ENCODE measurements at regions of chr16 and their contacts with region 1.

Region 1: DNA sequence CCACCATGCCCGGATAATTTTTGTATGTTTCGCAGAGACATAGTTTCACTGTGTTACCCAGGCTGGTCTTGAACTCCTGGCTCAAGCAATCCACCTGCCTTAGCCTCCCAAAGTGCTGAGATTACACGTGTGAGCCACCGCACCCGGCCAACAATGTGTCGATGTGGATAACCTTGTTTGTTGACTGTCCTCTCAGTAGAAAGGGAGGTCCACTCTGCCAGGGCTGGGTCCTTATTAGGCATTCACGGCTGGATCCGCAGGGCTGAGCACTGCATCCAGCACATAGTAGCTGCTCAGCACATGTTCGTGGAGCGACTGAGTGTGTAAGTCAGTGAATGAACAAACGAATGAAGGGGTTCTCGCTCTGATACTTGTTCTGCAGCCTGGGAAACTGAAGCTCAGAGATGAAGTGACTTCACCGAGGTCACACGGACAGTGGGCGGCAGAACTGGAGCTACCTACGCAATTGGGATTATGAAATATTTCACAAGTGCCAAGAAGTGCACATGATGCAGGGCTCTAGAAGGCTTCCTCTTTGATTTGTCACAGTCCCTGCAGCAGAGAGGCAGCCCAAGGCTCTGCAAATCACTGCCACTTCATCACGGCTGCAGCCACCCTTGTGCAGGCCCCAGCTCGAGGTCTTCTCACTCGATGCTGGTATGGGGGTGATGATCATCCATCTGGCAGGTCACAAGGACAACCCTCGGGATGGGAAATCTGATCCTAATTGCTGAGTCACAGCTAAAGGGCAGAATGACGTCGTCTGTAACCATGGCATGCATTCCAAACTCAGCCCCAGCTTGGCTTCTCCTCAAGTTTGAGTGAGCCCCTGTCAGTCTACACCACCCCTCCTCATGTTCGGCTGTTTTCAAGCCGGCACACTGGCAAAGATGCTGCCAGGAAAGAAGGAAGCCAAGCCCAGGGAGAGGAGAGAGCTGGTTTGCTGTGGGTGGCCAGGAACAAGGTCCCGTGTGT is 28.0 kb upstream of the SNN start:
- DNase-seq: no peak
- H3K4me3 Mint-ChIP-seq: no peak overlapping the region
- H3K27ac Mint-ChIP-seq: no peak overlapping the region
- H3K4me1 Mint-ChIP-seq: peaks cover 5% of the 10 kb centered on the region
- H3K27me3 Mint-ChIP-seq: peaks cover 11% of the 10 kb centered on the region

Region 2: GRCh38 chr16:11396241-11397048 is 243.8 kb before region 1 on chr16:
- intact Hi-C with region 1: loop called (anchors 1 kb)
- DNase-seq: peak; percentile 40
- H3K4me3 Mint-ChIP-seq: no peak overlapping the region
- H3K27ac Mint-ChIP-seq: no peak overlapping the region
- H3K4me1 Mint-ChIP-seq: no peaks in the 10 kb centered on the region
- H3K27me3 Mint-ChIP-seq: peaks cover 3% of the 10 kb centered on the region

Region 3: DNA sequence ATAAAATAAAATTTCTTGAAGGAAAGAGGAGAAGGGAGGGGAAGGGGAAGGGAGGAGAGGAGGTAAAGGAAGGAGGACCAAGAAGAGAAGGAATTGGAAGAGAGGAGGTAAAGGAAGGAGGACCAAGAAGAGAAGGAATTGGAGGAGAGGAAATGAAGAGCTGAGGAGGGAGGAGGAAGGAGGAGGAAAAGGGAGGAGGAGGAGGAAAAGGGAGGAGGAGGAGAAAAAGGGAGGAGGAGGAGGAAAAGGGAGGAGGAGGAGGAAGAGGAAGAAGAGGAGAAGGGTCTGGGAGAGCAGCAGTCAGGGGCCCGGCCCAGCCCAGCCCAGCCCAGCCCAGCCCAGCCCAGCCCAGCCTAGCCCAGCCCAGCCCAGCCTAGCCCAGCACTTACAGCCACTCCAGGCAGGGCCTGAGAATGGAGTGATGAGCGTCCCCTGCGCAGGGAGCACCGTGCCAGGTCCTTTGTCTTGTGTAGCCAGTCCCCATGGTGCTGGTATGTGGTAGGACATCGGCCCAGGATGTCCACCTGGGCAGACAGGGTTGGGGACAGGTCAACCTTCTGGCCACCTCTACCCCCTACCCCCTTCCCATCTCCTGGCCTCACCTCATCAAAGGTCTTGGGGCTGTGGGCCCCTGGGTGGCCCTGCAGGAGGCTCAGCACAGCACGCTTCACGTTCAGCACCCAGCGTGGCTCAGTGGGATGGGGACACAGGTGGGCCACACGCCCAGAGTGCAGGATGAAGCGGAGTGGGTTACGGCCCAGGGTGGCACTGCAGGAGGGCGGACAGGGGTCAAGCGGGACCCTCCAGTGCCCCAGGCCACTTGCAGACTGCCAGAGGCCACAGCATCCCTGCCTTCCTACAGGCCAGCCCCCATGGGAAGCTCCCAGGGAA is 124.4 kb before region 1 on chr16:
- intact Hi-C with region 1: no loop called
- DNase-seq: no peak
- H3K4me3 Mint-ChIP-seq: no peak overlapping the region
- H3K27ac Mint-ChIP-seq: no peak overlapping the region
- H3K4me1 Mint-ChIP-seq: no peaks in the 10 kb centered on the region
- H3K27me3 Mint-ChIP-seq: no peaks in the 10 kb centered on the region

Region 4: GRCh38 chr16:11560701-11561449 is 79.3 kb before region 1 on chr16:
- intact Hi-C with region 1: loop called (anchors 1 kb)
- DNase-seq: peak; percentile 66
- H3K4me3 Mint-ChIP-seq: peak overlapping the region; percentile 81
- H3K27ac Mint-ChIP-seq: peak overlapping the region; percentile 95
- H3K4me1 Mint-ChIP-seq: peaks cover 79% of the 10 kb centered on the region
- H3K27me3 Mint-ChIP-seq: no peaks in the 10 kb centered on the region

Region 5: GRCh38 chr16:11689031-11689761 is 49.0 kb after region 1 on chr16:
- intact Hi-C with region 1: no loop called
- DNase-seq: no peak
- H3K4me3 Mint-ChIP-seq: no peak overlapping the region
- H3K27ac Mint-ChIP-seq: peak overlapping the region; percentile 6
- H3K4me1 Mint-ChIP-seq: peaks cover 26% of the 10 kb centered on the region
- H3K27me3 Mint-ChIP-seq: no peaks in the 10 kb centered on the region

Region 6: DNA sequence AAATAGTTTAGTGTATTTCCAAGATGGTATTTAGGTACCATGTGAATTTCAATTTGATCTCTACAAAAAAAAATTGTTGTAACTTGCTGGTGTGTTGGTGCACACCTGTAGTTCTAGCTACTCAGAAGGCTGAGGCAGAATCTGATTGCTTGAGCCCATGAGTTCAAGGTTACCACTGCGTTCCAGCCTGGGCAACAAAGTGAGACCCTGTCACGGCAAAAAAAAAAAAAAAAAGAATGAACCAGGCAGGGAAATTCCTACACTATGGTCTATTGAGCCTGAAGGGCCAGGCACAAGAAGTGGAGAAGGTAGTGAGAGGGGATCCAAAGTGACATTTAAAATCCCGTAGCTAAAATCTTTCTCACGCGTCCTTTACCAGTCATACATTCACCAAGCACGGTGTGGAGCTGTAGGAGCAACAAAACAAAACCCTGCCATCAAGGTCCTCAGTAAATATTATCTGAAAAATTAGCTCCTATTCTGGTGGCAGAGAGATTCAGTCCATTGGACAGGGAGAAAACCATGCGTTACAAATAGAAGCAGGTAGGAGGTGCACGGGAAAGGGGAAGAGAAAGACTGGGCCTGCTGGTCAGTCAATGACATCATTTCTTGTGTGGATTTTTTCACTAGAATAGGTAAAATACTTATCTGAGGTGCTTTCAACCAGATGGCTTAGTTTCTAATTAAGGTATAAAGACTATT is 75.2 kb after region 1 on chr16:
- intact Hi-C with region 1: loop called (anchors 2 kb)
- DNase-seq: no peak
- H3K4me3 Mint-ChIP-seq: no peak overlapping the region
- H3K27ac Mint-ChIP-seq: peak overlapping the region; percentile 13
- H3K4me1 Mint-ChIP-seq: peaks cover 16% of the 10 kb centered on the region
- H3K27me3 Mint-ChIP-seq: no peaks in the 10 kb centered on the region

Measured in activated T-helper 1 cell treated with anti-CD3 and anti-CD28 coated beads, Interleukin-12 subunit alpha, Interleukin-12 subunit beta, Interleukin-2, Interleukin-4 antibody, amounts not matched to agents 30 ng/mL and 10 ng/mL and 1 ng/mL, durations not matched to agents 14 hours and 24 hours and 36 hours (primary cell).